ENCODE measurements at regions of chr2 and their contacts with region 1.

Region 1: DNA sequence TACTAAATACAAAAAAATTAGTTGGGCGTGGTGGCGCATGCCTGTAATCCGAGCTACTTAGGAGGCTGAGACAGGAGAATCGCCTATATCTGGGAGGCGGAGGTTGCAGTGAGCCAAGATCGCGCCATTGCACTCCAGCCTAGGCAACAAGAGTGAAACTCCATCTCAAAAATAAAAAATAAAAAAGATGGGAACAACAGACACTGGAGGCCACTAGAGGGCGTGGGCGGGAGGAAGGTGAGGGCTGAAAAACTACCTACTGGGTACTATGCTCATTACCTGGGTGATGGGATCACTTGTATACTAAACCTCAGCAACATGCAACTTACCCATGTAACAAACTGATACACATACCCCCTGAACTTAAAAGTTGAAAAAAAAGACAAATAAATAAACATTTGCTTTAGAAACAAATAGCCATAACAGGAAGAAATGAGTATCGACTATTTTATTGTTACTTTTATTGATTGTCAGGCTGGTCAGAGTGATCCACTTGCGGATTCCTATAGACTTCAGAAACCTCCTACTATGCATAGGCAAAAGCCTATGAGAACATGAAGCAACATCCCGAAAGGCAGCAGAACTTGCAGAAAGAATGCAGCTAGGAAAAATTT is 61.1 kb downstream of the TMEM163 start:
- DNase-seq: peak in 1 of 2 experiments; percentile 68
- H3K4me3 ChIP-seq: no peak overlapping the region
- H3K27ac ChIP-seq: no peak overlapping the region
- H3K4me1 ChIP-seq: no peaks in the 10 kb centered on the region
- H3K27me3 ChIP-seq: no peaks in the 10 kb centered on the region
- CTCF ChIP-seq: peak; percentile 47 to 64 (median 63)
- EP300 ChIP-seq: no peak
- POLR2A ChIP-seq: no peak
- RAD21 ChIP-seq: peak; percentile 64 to 67

Region 2: DNA sequence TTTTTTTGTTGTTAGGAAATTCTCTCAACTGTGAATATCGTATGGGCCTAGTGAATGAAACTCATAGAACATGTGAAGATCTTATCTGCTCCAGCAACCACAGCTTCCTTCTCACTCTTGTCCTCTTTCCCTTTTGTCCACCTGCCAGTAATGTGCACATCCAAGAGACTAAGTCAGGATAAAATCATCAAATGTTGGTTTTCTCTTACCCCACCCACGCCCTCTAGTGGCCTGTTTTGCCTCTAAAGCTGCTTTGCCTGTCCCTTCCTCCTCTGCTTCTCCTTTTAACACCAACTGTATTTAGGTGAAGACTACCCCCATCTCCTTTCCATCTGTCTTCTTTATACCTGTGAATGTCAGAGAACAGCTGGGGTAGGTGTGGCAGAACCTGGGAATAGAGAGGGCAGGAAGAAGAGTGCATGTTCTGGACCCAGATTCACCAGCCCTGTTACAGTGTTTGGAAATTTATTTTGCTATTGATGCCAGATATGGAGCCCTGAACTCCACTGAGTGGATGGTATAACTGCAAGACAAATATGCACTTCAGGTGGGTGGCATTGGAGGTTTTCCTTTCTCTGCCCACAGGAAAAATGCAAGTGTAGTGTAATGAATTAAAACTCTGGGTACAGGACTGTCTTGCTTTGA is 412.3 kb before region 1 on chr2:
- CTCF ChIA-PET with region 1: no interaction called
- POLR2A ChIA-PET with region 1: no interaction called
- DNase-seq: peak in 1 of 2 experiments; percentile 87
- H3K4me3 ChIP-seq: no peak overlapping the region
- H3K27ac ChIP-seq: no peak overlapping the region
- H3K4me1 ChIP-seq: peaks cover 0 to 6% (median 0%) of the 10 kb centered on the region in 4 experiments; a peak in 1 of 7 replicates
- H3K27me3 ChIP-seq: no peaks in the 10 kb centered on the region
- CTCF ChIP-seq: peak; percentile 49 to 90 (median 59)
- EP300 ChIP-seq: no peak
- POLR2A ChIP-seq: no peak
- RAD21 ChIP-seq: peak; percentile 66 to 72

Region 3: GRCh38 chr2:134594399-134594798 is 63.3 kb before region 1 on chr2:
- CTCF ChIA-PET with region 1: no interaction called
- POLR2A ChIA-PET with region 1: no interaction called
- DNase-seq: no peak
- H3K4me3 ChIP-seq: no peak overlapping the region
- H3K27ac ChIP-seq: no peak overlapping the region
- H3K4me1 ChIP-seq: peaks cover 0 to 7% (median 5%) of the 10 kb centered on the region in 4 experiments; a peak in 3 of 7 replicates
- H3K27me3 ChIP-seq: no peaks in the 10 kb centered on the region
- CTCF ChIP-seq: no peak
- EP300 ChIP-seq: no peak
- POLR2A ChIP-seq: no peak
- RAD21 ChIP-seq: no peak

Region 4: DNA sequence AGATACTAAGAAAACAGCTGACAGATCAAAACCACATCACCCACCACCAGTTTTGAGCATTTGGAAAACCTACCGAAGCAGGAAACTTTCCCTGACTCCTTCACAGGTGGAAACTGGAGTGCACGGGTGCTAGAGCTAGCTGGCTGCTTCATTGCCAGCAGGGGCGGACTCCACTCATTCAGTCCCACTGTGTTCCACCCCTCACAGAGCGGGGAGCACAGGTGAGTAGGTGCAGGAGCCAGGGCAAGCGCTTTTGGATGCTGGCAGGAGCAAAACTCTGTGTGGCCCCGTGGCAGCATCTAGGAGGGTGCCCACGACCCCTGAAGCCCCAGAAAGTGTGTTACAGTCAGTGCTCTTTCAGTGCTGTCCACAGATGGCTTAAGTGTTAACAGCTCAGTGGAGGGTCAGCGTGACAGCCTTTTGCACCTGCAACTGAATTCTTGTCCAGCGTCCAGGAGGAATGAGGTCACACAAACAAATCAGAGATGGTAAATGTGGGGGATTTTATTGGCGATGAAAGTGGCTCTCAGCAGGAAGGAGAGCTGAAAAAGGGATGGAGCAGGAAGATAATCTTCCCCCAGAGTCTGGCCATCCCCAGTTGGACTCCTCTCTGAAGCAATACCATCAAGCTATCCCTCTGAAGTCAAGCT is 10.0 kb before region 1 on chr2:
- CTCF ChIA-PET with region 1: interaction called, 10 read pairs
- POLR2A ChIA-PET with region 1: no interaction called
- DNase-seq: no peak
- H3K4me3 ChIP-seq: no peak overlapping the region
- H3K27ac ChIP-seq: no peak overlapping the region
- H3K4me1 ChIP-seq: no peaks in the 10 kb centered on the region
- H3K27me3 ChIP-seq: no peaks in the 10 kb centered on the region
- CTCF ChIP-seq: no peak
- EP300 ChIP-seq: no peak
- POLR2A ChIP-seq: no peak
- RAD21 ChIP-seq: no peak

Region 5: GRCh38 chr2:134669731-134670669 is 12.3 kb after region 1 on chr2:
- CTCF ChIA-PET with region 1: interaction called, 11 read pairs
- POLR2A ChIA-PET with region 1: interaction called, 4 read pairs
- DNase-seq: no peak
- H3K4me3 ChIP-seq: no peak overlapping the region
- H3K27ac ChIP-seq: no peak overlapping the region
- H3K4me1 ChIP-seq: peaks cover 0 to 7% (median 4%) of the 10 kb centered on the region in 4 experiments; a peak in 5 of 7 replicates
- H3K27me3 ChIP-seq: no peaks in the 10 kb centered on the region
- CTCF ChIP-seq: no peak
- EP300 ChIP-seq: no peak
- POLR2A ChIP-seq: no peak
- RAD21 ChIP-seq: no peak

Region 6: GRCh38 chr2:134718023-134718816 is 60.5 kb after region 1 on chr2:
- CTCF ChIA-PET with region 1: interaction called, 10 read pairs
- POLR2A ChIA-PET with region 1: no interaction called
- DNase-seq: peak in 1 of 2 experiments; percentile 77
- H3K4me3 ChIP-seq: peak overlapping the region; percentile 36 to 80 (median 69)
- H3K27ac ChIP-seq: no peak overlapping the region
- H3K4me1 ChIP-seq: peaks cover under 1 to 8% (median 3%) of the 10 kb centered on the region in 4 experiments; a peak in 6 of 7 replicates
- H3K27me3 ChIP-seq: peaks cover 19 to 48% (median 41%) of the 10 kb centered on the region in 4 experiments
- CTCF ChIP-seq: no peak
- EP300 ChIP-seq: no peak
- POLR2A ChIP-seq: no peak
- RAD21 ChIP-seq: no peak; a peak in 1 of 4 replicates

Measured in H1 (cell line).